ENCODE measurements at regions of chr14 and their contacts with region 1.

Region 1: DNA sequence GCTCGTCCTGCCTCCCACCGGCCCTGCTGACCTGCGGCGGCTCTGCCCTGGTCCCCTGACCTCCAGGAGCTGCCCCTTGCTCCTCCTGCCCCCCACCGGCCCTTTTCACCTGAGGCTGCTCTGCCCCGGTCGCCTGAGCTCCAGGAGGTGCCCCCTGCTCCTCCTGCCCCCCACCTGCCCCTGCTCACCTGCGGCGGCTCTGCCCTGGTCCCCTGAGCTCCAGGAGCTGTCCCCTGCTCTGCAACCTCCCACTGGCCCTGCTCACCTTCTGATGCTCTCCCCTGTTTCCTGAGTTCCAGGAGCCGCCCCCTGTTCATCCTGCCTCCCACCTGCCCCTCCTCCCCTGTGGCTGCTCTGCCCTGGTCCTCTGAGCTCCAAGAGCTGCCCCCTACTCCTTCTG is 101.3 kb downstream of the TMEM121 start:
- DNase-seq: no peak
- H3K4me3 ChIP-seq: no peak overlapping the region
- H3K27ac ChIP-seq: no peak overlapping the region
- H3K4me1 ChIP-seq: no peaks in the 10 kb centered on the region
- CTCF ChIP-seq: no peak

Region 2: DNA sequence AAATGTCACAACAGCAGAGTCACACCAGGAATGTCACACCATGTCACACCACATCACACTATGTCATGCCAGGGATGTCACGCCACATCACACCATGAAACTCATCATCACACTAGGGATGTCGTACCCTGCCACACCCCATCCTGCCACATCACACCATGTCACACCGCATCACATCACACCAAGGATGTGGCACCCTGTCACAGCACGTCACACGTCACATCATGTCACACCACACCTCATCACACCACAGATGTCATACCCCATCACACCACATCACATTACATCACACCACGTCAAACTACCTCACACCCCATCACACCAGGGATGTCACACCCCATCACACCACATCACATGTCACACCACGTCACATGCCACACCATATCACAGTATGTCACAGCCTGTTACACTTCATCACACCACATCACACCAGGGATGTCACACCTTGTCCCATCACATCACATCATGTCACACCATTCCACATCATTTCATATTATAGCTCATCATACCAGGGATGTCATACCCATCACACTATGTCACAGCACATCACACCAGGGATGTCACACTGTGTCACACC is 10.4 kb before region 1 on chr14:
- CTCF ChIA-PET with region 1: no interaction called
- POLR2A ChIA-PET with region 1: no interaction called
- intact Hi-C with region 1: loop called (anchors 2 kb)
- DNase-seq: no peak
- H3K4me3 ChIP-seq: no peak overlapping the region
- H3K27ac ChIP-seq: no peak overlapping the region
- H3K4me1 ChIP-seq: peaks cover 2% of the 10 kb centered on the region
- CTCF ChIP-seq: no peak

Region 3: DNA sequence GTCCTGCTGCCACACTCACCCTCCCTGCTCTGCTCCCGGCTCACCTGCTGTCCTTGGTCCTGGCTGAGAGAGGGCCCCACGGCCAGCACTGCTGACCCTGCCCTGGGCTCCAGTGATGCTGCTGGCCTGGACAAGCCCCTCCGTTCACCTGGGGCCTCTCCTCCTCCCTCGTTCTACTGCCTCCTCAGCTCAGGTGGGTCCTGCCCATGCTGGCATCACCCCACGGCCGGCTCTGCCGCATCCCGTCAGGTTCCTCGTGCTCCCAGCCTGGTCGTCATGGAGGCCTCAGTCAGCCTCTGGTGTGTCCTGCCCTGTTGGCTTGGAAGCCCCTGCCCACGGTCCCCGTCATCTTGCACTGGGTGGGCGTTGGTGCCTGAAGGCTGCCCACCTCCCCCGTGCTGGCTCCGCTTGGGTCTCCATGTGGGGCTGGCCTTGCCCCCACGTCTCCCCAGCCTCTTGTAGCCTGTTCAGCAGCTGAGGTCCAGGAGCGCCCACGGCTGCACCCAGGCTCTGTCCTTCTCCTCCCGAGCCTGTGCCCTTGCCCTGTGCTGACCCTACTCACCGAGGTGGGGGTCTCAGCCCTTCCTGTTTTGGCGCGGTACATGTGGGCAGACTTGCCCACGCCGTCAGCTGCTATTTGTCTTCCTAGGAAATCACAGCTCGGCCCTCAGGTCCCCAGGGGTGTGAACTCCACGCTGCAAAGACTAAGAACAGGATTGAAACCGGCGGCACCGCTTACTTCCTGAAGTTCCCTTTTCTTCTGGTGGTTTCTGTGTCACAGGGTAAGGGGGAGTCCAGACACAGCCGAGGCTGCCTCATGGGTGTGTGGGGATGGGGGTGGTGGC is 20.3 kb after region 1 on chr14:
- CTCF ChIA-PET with region 1: no interaction called
- POLR2A ChIA-PET with region 1: interaction called, 4 read pairs
- intact Hi-C with region 1: loop called (anchors 2 kb)
- DNase-seq: no peak
- H3K4me3 ChIP-seq: no peak overlapping the region
- H3K27ac ChIP-seq: no peak overlapping the region
- H3K4me1 ChIP-seq: no peaks in the 10 kb centered on the region
- CTCF ChIP-seq: no peak